ENCODE measurements at regions of chr13 and their contacts with region 1.

Region 1: GRCh38 chr13:40666045-40666904 is at the start of gene FOXO1:
- DNase-seq: peak; percentile 93
- ATAC-seq: peak; percentile 70
- H3K4me3 Mint-ChIP-seq: peak within 1 kb of the TSS; percentile 91
- H3K27ac Mint-ChIP-seq: peak within 1 kb of the TSS; percentile 92
- H3K4me1 Mint-ChIP-seq: peaks cover 39% of the 10 kb centered on the region
- H3K27me3 Mint-ChIP-seq: no peaks in the 10 kb centered on the region
- total RNA-seq, gene FOXO1: 37.5 to 42.5 TPM

Region 2: GRCh38 chr13:39672378-39673132 is 993.7 kb before region 1 on chr13:
- CTCF ChIA-PET with region 1: no interaction called
- POLR2A ChIA-PET with region 1: no interaction called
- intact Hi-C with region 1: no loop called
- DNase-seq: no peak
- ATAC-seq: no peak
- H3K4me3 Mint-ChIP-seq: no peak overlapping the region
- H3K27ac Mint-ChIP-seq: no peak overlapping the region
- H3K4me1 Mint-ChIP-seq: peaks cover 3% of the 10 kb centered on the region
- H3K27me3 Mint-ChIP-seq: no peaks in the 10 kb centered on the region

Region 3: DNA sequence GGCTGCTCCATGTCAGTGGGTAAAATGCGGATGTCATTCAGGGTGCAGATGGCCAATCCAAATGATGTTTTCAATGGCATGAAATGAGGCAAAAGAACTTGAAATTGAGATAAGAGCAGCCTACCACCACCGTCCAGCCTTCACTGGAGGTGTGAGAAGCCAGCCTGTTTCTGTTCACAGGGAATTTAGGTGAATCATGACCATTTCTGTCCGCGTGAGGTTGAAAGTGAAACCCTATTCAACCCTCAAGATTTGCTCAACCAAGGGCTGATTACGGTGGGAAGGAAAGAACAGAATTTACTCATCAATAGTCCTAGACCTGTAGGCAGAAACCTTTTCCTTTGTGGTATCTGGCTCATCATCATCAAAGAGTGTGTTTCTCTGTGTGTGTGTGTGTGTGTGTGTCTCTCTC is 640.1 kb before region 1 on chr13:
- CTCF ChIA-PET with region 1: no interaction called
- POLR2A ChIA-PET with region 1: no interaction called
- intact Hi-C with region 1: loop called (anchors 1 to 2 kb)
- DNase-seq: peak; percentile 79
- ATAC-seq: peak; percentile 82
- H3K4me3 Mint-ChIP-seq: peak overlapping the region; percentile 25
- H3K27ac Mint-ChIP-seq: peak overlapping the region; percentile 28
- H3K4me1 Mint-ChIP-seq: peaks cover 48% of the 10 kb centered on the region
- H3K27me3 Mint-ChIP-seq: no peaks in the 10 kb centered on the region

Region 4: GRCh38 chr13:40221460-40222201 is 444.6 kb before region 1 on chr13:
- CTCF ChIA-PET with region 1: no interaction called
- POLR2A ChIA-PET with region 1: no interaction called
- intact Hi-C with region 1: loop called (anchors 2 to 10 kb)
- DNase-seq: peak; percentile 62
- ATAC-seq: peak; percentile 63
- H3K4me3 Mint-ChIP-seq: peak overlapping the region; percentile 45
- H3K27ac Mint-ChIP-seq: peak overlapping the region; percentile 91
- H3K4me1 Mint-ChIP-seq: peaks cover 61% of the 10 kb centered on the region
- H3K27me3 Mint-ChIP-seq: no peaks in the 10 kb centered on the region

Region 5: DNA sequence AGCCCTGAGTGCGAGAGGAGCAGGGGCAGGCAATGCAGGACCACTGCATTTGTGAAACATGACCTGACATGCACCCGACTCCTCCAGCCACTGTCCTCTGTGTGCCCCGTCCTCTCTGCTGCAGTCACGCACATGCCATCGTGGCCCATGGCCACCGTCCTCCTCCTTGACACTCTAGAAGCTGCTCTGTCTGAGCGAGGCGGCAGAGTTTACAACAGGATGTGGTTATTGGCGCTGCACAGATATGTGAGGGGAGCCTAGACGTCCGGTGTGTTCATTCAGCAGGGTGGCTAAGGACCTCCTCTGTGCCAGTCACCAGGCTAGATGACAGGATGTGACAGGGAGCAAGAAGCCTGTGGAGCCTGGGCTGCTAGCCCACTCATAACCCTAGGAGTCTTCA is 277.7 kb before region 1 on chr13:
- CTCF ChIA-PET with region 1: no interaction called
- POLR2A ChIA-PET with region 1: no interaction called
- intact Hi-C with region 1: loop called (anchors 1 to 2 kb)
- DNase-seq: peak; percentile 89
- ATAC-seq: peak; percentile 98
- H3K4me3 Mint-ChIP-seq: peak overlapping the region; percentile 71
- H3K27ac Mint-ChIP-seq: peak overlapping the region; percentile 95
- H3K4me1 Mint-ChIP-seq: peaks cover 44% of the 10 kb centered on the region
- H3K27me3 Mint-ChIP-seq: no peaks in the 10 kb centered on the region

Region 6: GRCh38 chr13:40597740-40598370 is 68.4 kb before region 1 on chr13:
- CTCF ChIA-PET with region 1: no interaction called
- POLR2A ChIA-PET with region 1: no interaction called
- intact Hi-C with region 1: loop called (anchors 2 kb)
- DNase-seq: no peak
- ATAC-seq: no peak
- H3K4me3 Mint-ChIP-seq: peak overlapping the region; percentile 57
- H3K27ac Mint-ChIP-seq: peak overlapping the region; percentile 89
- H3K4me1 Mint-ChIP-seq: peaks cover 92% of the 10 kb centered on the region
- H3K27me3 Mint-ChIP-seq: no peaks in the 10 kb centered on the region

Region 7: GRCh38 chr13:40682449-40683240 is 16.4 kb after region 1 on chr13:
- CTCF ChIA-PET with region 1: interaction called, 14 read pairs
- POLR2A ChIA-PET with region 1: no interaction called
- intact Hi-C with region 1: no loop called
- DNase-seq: no peak
- ATAC-seq: peak; percentile 44
- H3K4me3 Mint-ChIP-seq: no peak overlapping the region
- H3K27ac Mint-ChIP-seq: peak overlapping the region; percentile 66
- H3K4me1 Mint-ChIP-seq: peaks cover 16% of the 10 kb centered on the region
- H3K27me3 Mint-ChIP-seq: no peaks in the 10 kb centered on the region

Region 8: GRCh38 chr13:41061075-41061913 is 395.0 kb after region 1 on chr13 and contains the start of gene WBP4:
- CTCF ChIA-PET with region 1: no interaction called
- POLR2A ChIA-PET with region 1: no interaction called
- intact Hi-C with region 1: loop called in 1 of 2 experiments (anchors 1 kb)
- DNase-seq: peak; percentile 93
- ATAC-seq: peak; percentile 77
- H3K4me3 Mint-ChIP-seq: peak within 1 kb of the TSS; percentile 98
- H3K27ac Mint-ChIP-seq: peak within 1 kb of the TSS; percentile 100
- H3K4me1 Mint-ChIP-seq: peaks cover 57% of the 10 kb centered on the region
- H3K27me3 Mint-ChIP-seq: no peaks in the 10 kb centered on the region
- total RNA-seq, gene WBP4: 13.3 to 16.2 TPM